Transverse colon (tissue), 4 donors: ENCODE measurements at regions of chr15 and their contacts with region 1.

Region 1: GRCh38 chr15:63466378-63467192 is 37.8 kb upstream of the USP3 start:
- DNase-seq: no peak
- H3K4me3 ChIP-seq: no peak overlapping the region
- H3K27ac ChIP-seq: peak overlapping the region in 1 of 4 donors; percentile 42
- H3K4me1 ChIP-seq: peaks cover 22 to 55% (median 46%) of the 10 kb centered on the region in 4 donors
- H3K27me3 ChIP-seq: no peaks in the 10 kb centered on the region
- CTCF ChIP-seq: peak; percentile 56 to 77 (median 61)
- EP300 ChIP-seq: no peak
- POLR2A ChIP-seq: no peak

Region 2: GRCh38 chr15:63504247-63504978 is 37.8 kb after region 1 on chr15 and contains the start of gene USP3:
- in situ Hi-C with region 1: no loop called
- intact Hi-C with region 1: loop called (anchors 2 kb)
- DNase-seq: peak; percentile 97
- H3K4me3 ChIP-seq: peak within 1 kb of the TSS; percentile 74 to 94 (median 91)
- H3K27ac ChIP-seq: peak within 1 kb of the TSS; percentile 98 to 100 (median 98)
- H3K4me1 ChIP-seq: peaks cover 39 to 78% (median 58%) of the 10 kb centered on the region in 4 donors
- H3K27me3 ChIP-seq: no peaks in the 10 kb centered on the region
- CTCF ChIP-seq: peak; percentile 4 to 52 (median 38)
- EP300 ChIP-seq: no peak
- POLR2A ChIP-seq: peak; percentile 93
- total RNA-seq, gene USP3: 56.1 to 93.0 (median 73.7) TPM

Region 3: GRCh38 chr15:63593705-63594671 is 127.4 kb after region 1 on chr15:
- in situ Hi-C with region 1: loop called in 2 of 4 experiments (anchors 5 to 10 kb)
- intact Hi-C with region 1: no loop called
- DNase-seq: no peak
- H3K4me3 ChIP-seq: no peak overlapping the region
- H3K27ac ChIP-seq: peak overlapping the region in 3 of 4 donors; percentile 91 to 97 (median 96)
- H3K4me1 ChIP-seq: peaks cover 10 to 42% (median 36%) of the 10 kb centered on the region in 4 donors
- H3K27me3 ChIP-seq: no peaks in the 10 kb centered on the region
- CTCF ChIP-seq: no peak
- EP300 ChIP-seq: no peak
- POLR2A ChIP-seq: no peak